ENCODE measurements at regions of chr17 and their contacts with region 1.

Region 1: DNA sequence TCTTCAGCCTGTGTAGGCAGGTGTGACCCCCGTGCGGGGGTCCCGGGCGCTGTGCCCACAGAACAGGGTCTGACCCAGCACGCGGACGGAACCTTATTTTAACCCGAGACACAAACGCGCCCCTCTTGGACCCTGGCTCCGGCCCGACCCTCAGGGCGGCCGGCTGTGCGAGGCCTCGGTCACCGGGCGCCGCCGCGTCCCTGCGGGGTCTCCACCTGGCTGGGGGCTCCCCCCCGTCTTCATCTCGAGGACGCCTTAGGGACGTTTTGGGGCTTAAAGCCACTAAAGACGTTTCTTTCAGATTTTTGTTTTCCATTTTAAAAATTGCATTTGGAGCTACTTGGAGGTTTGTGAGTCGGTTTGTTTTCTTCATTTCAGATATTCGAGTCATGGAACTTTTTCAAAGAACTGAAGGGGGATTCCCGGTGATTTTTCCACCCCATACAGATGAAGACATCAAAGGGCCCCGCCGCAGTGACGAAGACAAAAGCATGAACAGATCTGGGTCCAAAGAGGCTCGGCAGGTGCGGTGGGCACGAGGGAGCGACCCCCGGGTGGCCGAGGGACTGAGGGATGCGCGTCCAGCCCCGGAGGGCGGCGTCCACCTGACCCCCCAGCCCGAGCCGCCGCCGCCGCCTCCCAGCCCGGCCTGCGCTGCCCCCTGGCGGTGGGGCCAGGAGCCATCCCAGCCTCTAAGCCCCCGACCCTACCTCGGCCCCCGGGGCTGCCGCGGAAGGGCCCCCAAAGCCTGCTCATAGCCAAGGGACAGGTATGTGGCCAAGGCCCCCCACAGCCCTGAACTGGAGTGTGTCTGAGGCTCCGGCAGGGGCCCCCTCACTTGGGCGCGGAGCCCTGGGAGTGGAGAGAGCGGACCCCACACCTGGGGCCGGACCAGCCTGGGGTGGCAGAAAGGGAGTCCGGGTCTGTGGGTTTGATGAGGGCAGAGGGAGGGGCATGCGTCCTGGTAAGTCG is 3.8 kb upstream of the CD7 start:
- DNase-seq: peak in 4 of 6 donors; percentile 51 to 84 (median 72)
- ATAC-seq: peak; percentile 64 to 77 (median 73)
- H3K4me3 ChIP-seq: no peak overlapping the region
- H3K27ac ChIP-seq: no peak overlapping the region
- H3K4me1 ChIP-seq: peaks cover 0 to 3% (median 0%) of the 10 kb centered on the region in 3 donors
- H3K27me3 ChIP-seq: no peaks in the 10 kb centered on the region
- CTCF ChIP-seq: peak; percentile 82 to 92 (median 88)

Region 2: DNA sequence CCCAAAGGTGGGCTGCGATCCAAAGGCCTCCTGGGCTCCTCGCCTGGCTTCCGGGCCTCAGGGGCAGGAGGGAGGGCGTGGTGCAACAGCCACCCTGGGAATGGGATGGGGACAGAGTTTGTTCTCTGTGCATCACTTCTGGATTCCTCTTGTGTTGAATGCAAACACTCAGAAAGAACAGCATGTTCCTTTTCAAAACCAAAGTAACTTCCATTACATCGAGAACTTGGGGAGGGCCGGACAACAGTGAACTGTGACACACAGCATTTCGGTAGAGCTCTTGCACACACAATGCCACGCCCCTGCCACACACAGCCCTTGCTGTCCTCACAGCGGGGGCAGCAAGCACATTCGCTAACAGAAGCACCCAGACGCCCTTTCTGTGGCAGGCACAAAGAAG is 187.1 kb before region 1 on chr17:
- intact Hi-C with region 1: no loop called
- DNase-seq: no peak
- ATAC-seq: peak in 2 of 4 donors; percentile 41 to 58
- H3K4me3 ChIP-seq: no peak overlapping the region
- H3K27ac ChIP-seq: no peak overlapping the region
- H3K4me1 ChIP-seq: no peaks in the 10 kb centered on the region
- H3K27me3 ChIP-seq: no peaks in the 10 kb centered on the region
- CTCF ChIP-seq: no peak

Region 3: GRCh38 chr17:82205719-82206508 is 115.3 kb before region 1 on chr17:
- intact Hi-C with region 1: loop called in 1 of 3 experiments (anchors 10 kb)
- DNase-seq: peak; percentile 68 to 91 (median 81)
- ATAC-seq: peak; percentile 88 to 98 (median 95)
- H3K4me3 ChIP-seq: no peak overlapping the region
- H3K27ac ChIP-seq: peak overlapping the region; percentile 34 to 78 (median 72)
- H3K4me1 ChIP-seq: peaks cover 0 to 10% (median 0%) of the 10 kb centered on the region in 3 donors
- H3K27me3 ChIP-seq: no peaks in the 10 kb centered on the region
- CTCF ChIP-seq: peak; percentile 69 to 90 (median 86)

Region 4: GRCh38 chr17:82230627-82231311 is 90.5 kb before region 1 on chr17:
- intact Hi-C with region 1: loop called in 2 of 3 experiments (anchors 5 to 10 kb)
- DNase-seq: peak in 4 of 6 donors; percentile 38 to 87 (median 75)
- ATAC-seq: peak; percentile 29 to 65 (median 58)
- H3K4me3 ChIP-seq: peak overlapping the region; percentile 14 to 40 (median 28)
- H3K27ac ChIP-seq: peak overlapping the region in 3 of 4 donors; percentile 39 to 69 (median 66)
- H3K4me1 ChIP-seq: peaks cover 0 to 5% (median 1%) of the 10 kb centered on the region in 3 donors
- H3K27me3 ChIP-seq: no peaks in the 10 kb centered on the region
- CTCF ChIP-seq: peak in 3 of 4 donors; percentile 16 to 39 (median 32)

Region 5: DNA sequence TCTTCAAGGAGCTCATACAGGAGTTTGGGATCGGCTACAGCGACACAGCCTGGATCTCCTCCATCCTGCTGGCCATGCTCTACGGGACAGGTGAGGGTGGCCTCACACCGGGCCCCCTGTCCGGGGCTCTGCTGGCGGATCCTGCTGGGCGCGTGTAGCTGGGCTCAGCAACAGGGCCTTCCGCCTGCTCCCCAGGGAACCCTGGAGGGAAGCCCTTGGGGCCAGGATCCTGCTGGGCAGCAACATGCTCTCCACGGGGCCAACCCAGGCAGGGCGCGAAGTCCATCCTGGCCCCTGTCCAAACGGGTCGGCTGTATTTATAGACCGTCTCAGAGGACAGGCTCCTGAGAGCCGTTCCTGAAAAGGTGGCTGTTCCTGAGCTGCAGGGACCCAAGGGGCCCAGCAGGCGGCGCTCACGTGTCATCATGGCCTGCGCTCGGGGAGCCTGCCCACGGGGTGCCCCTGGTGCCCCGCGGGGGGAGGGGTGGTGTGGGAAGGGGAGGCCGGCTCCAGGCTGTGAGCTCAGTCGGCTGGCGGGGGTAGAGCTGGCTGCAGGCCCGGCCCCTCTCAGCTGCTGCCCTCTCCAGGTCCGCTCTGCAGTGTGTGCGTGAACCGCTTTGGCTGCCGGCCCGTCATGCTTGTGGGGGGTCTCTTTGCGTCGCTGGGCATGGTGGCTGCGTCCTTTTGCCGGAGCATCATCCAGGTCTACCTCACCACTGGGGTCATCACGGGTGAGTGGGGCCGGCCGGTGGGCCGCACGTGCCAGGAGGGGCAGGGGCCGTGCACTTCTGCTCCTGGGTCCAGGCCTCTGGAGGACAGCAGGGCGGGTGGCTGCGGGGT is 84.9 kb before region 1 on chr17:
- intact Hi-C with region 1: loop called (anchors 2 to 10 kb)
- DNase-seq: peak in 5 of 6 donors; percentile 63 to 89 (median 80)
- ATAC-seq: peak; percentile 42 to 75 (median 62)
- H3K4me3 ChIP-seq: no peak overlapping the region
- H3K27ac ChIP-seq: no peak overlapping the region
- H3K4me1 ChIP-seq: peaks cover 5 to 10% (median 9%) of the 10 kb centered on the region in 3 donors
- H3K27me3 ChIP-seq: no peaks in the 10 kb centered on the region
- CTCF ChIP-seq: peak; percentile 85 to 94 (median 90)

Region 6: GRCh38 chr17:82246365-82247174 is 74.7 kb before region 1 on chr17:
- intact Hi-C with region 1: no loop called
- DNase-seq: peak in 3 of 6 donors; percentile 22 to 67 (median 39)
- ATAC-seq: peak in 2 of 4 donors; percentile 15 to 23
- H3K4me3 ChIP-seq: no peak overlapping the region
- H3K27ac ChIP-seq: no peak overlapping the region
- H3K4me1 ChIP-seq: peaks cover 8 to 19% (median 19%) of the 10 kb centered on the region in 3 donors
- H3K27me3 ChIP-seq: no peaks in the 10 kb centered on the region
- CTCF ChIP-seq: no peak

Measured in pancreas (tissue), 10 donors.